ENCODE measurements at regions of chr14 and their contacts with region 1.

Region 1: DNA sequence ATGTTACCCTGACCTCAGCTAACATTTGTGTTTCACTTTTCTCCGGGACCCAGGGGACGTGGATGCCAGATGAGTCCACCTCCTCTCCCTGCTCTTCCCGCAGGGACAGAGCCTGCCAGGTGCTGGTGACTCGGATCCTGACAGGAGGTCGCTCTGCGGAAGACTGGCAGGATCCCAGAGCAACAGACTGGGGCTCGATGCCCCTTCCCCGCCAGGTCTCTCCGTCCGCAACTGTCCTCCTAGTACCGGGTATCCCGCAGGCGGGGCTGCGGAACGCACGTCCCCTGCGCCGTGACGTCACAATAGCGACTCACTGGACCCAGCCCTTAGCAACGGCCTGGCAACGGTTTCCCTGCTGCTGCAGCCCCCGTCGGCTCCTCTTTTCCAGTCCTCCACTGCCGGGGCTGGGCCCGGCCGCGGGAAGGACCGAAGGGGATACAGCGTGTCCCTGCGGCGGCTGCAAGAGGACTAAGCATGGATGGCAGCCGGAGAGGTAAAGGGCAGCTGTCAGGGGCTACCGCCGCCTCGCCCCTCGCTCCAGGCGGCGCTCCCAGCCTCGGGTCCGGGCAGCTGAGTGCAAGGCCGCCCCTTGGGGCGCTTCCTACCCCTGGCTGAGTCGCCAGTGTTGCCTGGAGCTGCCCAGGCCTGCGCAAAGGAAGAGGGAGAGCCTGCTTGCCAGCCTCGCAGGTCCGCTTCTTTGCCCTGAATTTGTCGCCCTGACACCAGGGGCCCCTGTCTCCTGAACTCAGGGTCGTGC is at the start of gene SPATA7:
- DNase-seq: peak; percentile 94 to 97 (median 96)
- H3K4me3 ChIP-seq: peak within 1 kb of the TSS; percentile 53
- H3K27ac ChIP-seq: peak within 1 kb of the TSS; percentile 80 to 81
- H3K4me1 ChIP-seq: peaks cover 2% of the 10 kb centered on the region
- H3K27me3 ChIP-seq: no peaks in the 10 kb centered on the region
- CTCF ChIP-seq: peak in 1 of 3 donors; percentile 17
- EP300 ChIP-seq: no peak
- POLR2A ChIP-seq: peak; percentile 92
- total RNA-seq, gene SPATA7: 20.3 to 56.0 (median 30.1) TPM

Region 2: GRCh38 chr14:88078525-88078924 is 307.0 kb before region 1 on chr14:
- intact Hi-C with region 1: no loop called
- DNase-seq: no peak
- H3K4me3 ChIP-seq: no peak overlapping the region
- H3K27ac ChIP-seq: no peak overlapping the region
- H3K4me1 ChIP-seq: no peaks in the 10 kb centered on the region
- H3K27me3 ChIP-seq: no peaks in the 10 kb centered on the region
- CTCF ChIP-seq: no peak
- EP300 ChIP-seq: no peak
- POLR2A ChIP-seq: no peak

Region 3: GRCh38 chr14:88189417-88190191 is 195.9 kb before region 1 on chr14:
- intact Hi-C with region 1: loop called in 3 of 4 experiments (anchors 10 kb)
- DNase-seq: peak; percentile 58 to 91 (median 81)
- H3K4me3 ChIP-seq: peak overlapping the region; percentile 9
- H3K27ac ChIP-seq: peak overlapping the region in 1 of 2 donors; percentile 36
- H3K4me1 ChIP-seq: no peaks in the 10 kb centered on the region
- H3K27me3 ChIP-seq: no peaks in the 10 kb centered on the region
- CTCF ChIP-seq: peak; percentile 43 to 69 (median 62)
- EP300 ChIP-seq: no peak
- POLR2A ChIP-seq: no peak